ENCODE measurements at regions of chr14 and their contacts with region 1.

Region 1: GRCh38 chr14:61281186-61281947 is at the start of gene TMEM30B:
- DNase-seq: peak in 32 of 35 experiments; percentile 12 to 56 (median 38)
- ATAC-seq: peak in 3 of 4 experiments; percentile 21 to 44 (median 38)
- H3K4me3 ChIP-seq: peak within 1 kb of the TSS; percentile 62 to 90
- H3K4me3 Mint-ChIP-seq: peak within 1 kb of the TSS; percentile 88 to 95 (median 89)
- H3K27ac ChIP-seq: peak within 1 kb of the TSS; percentile 66
- H3K27ac Mint-ChIP-seq: peak within 1 kb of the TSS; percentile 91 to 92
- H3K4me1 ChIP-seq: peaks cover 0 to 16% of the 10 kb centered on the region in 2 experiments
- H3K4me1 Mint-ChIP-seq: peaks cover 35 to 38% (median 36%) of the 10 kb centered on the region in 3 donors
- H3K27me3 ChIP-seq: peaks cover 5 to 24% of the 10 kb centered on the region in 2 experiments
- H3K27me3 Mint-ChIP-seq: peaks cover 0 to 6% of the 10 kb centered on the region in 2 donors
- total RNA-seq, gene TMEM30B: 2.1 to 8.6 (median 2.9) TPM

Region 2: GRCh38 chr14:60734465-60735242 is 546.7 kb before region 1 on chr14 and contains the start of gene MNAT1:
- CTCF ChIA-PET with region 1: interaction called in 1 of 2 experiments, 18 read pairs
- POLR2A ChIA-PET with region 1: no interaction called
- DNase-seq: peak; percentile 57 to 85 (median 71)
- ATAC-seq: peak; percentile 94 to 98 (median 96)
- H3K4me3 ChIP-seq: peak within 1 kb of the TSS; percentile 96 to 100
- H3K4me3 Mint-ChIP-seq: peak within 1 kb of the TSS; percentile 99 to 100 (median 99)
- H3K27ac ChIP-seq: peak within 1 kb of the TSS; percentile 46
- H3K27ac Mint-ChIP-seq: peak within 1 kb of the TSS; percentile 79 to 90
- H3K4me1 ChIP-seq: peaks cover 0 to 12% of the 10 kb centered on the region in 2 experiments
- H3K4me1 Mint-ChIP-seq: peaks cover 28 to 36% (median 34%) of the 10 kb centered on the region in 3 donors
- H3K27me3 ChIP-seq: peaks cover 2 to 5% of the 10 kb centered on the region in 2 experiments
- H3K27me3 Mint-ChIP-seq: peaks cover 22% of the 10 kb centered on the region in 2 donors
- total RNA-seq, gene MNAT1: 14.7 to 24.8 (median 19.2) TPM

Region 3: DNA sequence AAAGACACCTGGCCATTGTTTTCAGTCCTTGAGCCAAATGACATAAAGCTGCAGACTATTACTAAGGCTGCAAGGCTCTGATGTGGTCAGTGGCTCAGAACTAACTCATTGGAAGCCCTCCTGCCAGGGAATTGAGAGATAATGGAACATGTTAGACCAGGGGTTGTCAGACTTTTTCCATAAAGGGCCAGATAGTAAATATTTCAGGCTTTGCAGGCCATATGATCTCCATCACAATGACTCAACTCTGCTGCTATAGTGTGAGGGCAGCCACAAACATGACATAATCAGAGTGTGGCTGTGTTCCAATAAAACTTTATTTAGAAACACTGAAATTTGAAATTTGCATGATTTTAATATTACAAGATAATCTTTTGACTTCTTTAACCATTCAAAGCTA is 140.5 kb before region 1 on chr14:
- CTCF ChIA-PET with region 1: no interaction called
- POLR2A ChIA-PET with region 1: no interaction called
- DNase-seq: no peak
- ATAC-seq: no peak
- H3K4me3 ChIP-seq: no peak overlapping the region
- H3K4me3 Mint-ChIP-seq: no peak overlapping the region
- H3K27ac ChIP-seq: no peak overlapping the region
- H3K27ac Mint-ChIP-seq: no peak overlapping the region
- H3K4me1 ChIP-seq: no peaks in the 10 kb centered on the region
- H3K4me1 Mint-ChIP-seq: no peaks in the 10 kb centered on the region
- H3K27me3 ChIP-seq: peaks cover 0 to 12% of the 10 kb centered on the region in 2 experiments
- H3K27me3 Mint-ChIP-seq: peaks cover 20 to 32% of the 10 kb centered on the region in 2 donors

Region 4: DNA sequence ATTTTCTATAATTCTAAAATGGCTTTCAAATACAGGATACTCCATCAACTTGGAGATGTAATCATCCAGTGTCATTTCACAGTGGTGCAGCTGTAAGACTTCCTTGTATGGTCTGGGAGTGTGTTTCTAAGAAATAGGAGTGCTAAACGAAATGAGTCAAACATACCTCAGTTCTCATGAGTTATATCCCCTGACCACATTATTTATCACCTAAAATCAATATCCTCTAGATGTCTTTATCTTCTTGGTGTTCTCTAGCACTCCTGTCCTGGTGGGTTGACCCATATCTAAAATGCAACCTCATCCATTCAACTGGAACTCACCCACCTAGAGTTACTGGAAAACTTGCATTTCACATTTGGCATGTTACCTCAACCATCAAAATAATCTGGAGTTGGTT is 33.4 kb before region 1 on chr14:
- CTCF ChIA-PET with region 1: no interaction called
- POLR2A ChIA-PET with region 1: no interaction called
- DNase-seq: no peak
- ATAC-seq: no peak
- H3K4me3 ChIP-seq: no peak overlapping the region
- H3K4me3 Mint-ChIP-seq: no peak overlapping the region
- H3K27ac ChIP-seq: no peak overlapping the region
- H3K27ac Mint-ChIP-seq: no peak overlapping the region
- H3K4me1 ChIP-seq: no peaks in the 10 kb centered on the region
- H3K4me1 Mint-ChIP-seq: peaks cover 0 to 6% (median 2%) of the 10 kb centered on the region in 3 donors
- H3K27me3 ChIP-seq: peaks cover 0 to 10% of the 10 kb centered on the region in 2 experiments
- H3K27me3 Mint-ChIP-seq: peaks cover 4 to 10% of the 10 kb centered on the region in 2 donors

Region 5: DNA sequence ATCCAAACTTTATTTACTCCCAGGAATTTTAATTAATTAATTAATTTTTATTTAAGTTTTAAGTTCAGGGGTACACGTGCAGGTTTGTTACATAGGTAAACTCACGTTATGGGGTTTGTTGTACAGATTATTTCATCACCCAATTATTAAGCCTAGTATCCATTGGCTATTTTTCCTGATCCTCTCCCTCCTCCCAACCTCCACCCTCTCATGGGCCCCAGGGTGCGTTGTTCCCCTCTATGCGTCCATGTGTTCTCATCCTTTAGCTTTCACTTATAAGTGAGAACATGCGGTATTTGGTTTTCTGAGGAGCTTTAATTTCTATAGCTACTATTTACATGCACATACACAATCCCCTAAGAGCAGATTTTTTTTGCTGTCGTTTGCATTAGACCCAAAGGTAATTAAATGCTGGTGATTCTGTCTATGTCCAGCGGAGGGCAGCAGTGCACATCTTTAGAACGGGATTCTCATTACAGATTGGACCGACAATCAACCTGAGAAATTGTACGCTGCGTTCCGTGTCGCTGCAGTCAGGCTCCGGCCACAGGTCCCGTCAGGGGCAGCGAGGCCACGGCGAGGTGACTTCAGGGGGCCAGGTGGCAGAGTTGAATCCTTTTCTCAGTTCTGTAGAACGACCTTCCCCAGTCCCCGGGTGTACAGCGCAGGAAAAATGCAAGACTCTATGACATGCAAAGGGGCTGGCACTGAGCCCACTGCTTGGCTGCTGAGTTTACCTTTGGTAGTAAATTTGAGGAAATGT is 11.9 kb before region 1 on chr14:
- CTCF ChIA-PET with region 1: interaction called, 7 to 10 read pairs
- POLR2A ChIA-PET with region 1: interaction called in 1 of 2 experiments, 4 read pairs
- DNase-seq: peak; percentile 50 to 89 (median 69)
- ATAC-seq: peak; percentile 86 to 94 (median 93)
- H3K4me3 ChIP-seq: peak overlapping the region; percentile 2 to 74
- H3K4me3 Mint-ChIP-seq: peak overlapping the region; percentile 47 to 58 (median 54)
- H3K27ac ChIP-seq: no peak overlapping the region
- H3K27ac Mint-ChIP-seq: no peak overlapping the region
- H3K4me1 ChIP-seq: peaks cover 2 to 5% of the 10 kb centered on the region in 2 experiments
- H3K4me1 Mint-ChIP-seq: peaks cover 4 to 7% (median 5%) of the 10 kb centered on the region in 3 donors
- H3K27me3 ChIP-seq: peaks cover 6 to 29% of the 10 kb centered on the region in 2 experiments
- H3K27me3 Mint-ChIP-seq: peaks cover 40 to 55% of the 10 kb centered on the region in 2 donors

Region 6: GRCh38 chr14:61295806-61296550 is 14.6 kb after region 1 on chr14:
- CTCF ChIA-PET with region 1: interaction called, 3 to 10 read pairs
- POLR2A ChIA-PET with region 1: interaction called, 3 read pairs
- DNase-seq: no peak
- ATAC-seq: peak in 3 of 4 experiments; percentile 30 to 47 (median 31)
- H3K4me3 ChIP-seq: no peak overlapping the region
- H3K4me3 Mint-ChIP-seq: no peak overlapping the region
- H3K27ac ChIP-seq: no peak overlapping the region
- H3K27ac Mint-ChIP-seq: peak overlapping the region in 1 of 2 donors; percentile 37
- H3K4me1 ChIP-seq: peaks cover 25 to 29% of the 10 kb centered on the region in 2 experiments
- H3K4me1 Mint-ChIP-seq: peaks cover 48 to 51% (median 50%) of the 10 kb centered on the region in 3 donors
- H3K27me3 ChIP-seq: no peaks in the 10 kb centered on the region
- H3K27me3 Mint-ChIP-seq: no peaks in the 10 kb centered on the region

Region 7: DNA sequence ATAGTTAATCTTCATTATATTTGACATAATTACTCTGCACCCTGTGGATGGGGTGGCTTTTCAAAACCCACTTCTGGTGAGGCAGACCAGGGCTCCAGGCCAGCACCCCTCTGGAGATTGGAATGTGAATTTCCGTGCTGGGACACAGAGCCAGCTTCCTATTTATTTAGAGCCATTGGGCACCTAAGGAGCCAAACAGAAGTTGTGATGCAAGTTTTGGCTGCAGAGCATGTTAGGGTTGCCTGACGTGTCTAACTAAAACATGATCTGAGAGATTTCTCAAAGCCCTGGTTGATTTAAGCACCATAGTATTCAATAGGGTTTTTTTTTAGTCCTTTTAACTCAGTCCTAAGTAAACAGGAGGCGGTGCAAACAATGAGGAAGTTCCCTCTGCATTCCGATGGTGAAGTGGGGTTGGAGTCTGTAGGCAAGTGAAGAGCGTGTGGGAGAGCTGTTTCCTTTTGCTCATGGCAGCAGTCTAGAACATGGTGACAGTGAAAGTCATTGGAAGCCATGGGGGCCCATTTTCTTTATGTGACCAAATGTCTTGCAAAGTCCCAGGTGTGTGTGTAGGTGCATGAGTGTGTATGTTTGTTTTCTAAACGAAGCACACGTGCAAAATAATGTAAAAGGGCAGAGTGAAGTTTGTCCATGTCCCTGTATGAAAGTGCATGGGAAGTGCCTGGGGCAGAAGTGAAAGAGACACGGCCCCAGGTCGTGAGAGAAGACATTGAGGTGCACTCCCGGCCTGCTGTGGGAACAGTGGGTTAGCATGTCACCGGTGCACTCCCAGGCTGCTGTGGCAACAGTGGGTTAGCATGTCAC is 157.7 kb after region 1 on chr14:
- CTCF ChIA-PET with region 1: no interaction called
- POLR2A ChIA-PET with region 1: interaction called in 1 of 2 experiments, 13 read pairs
- DNase-seq: peak in 27 of 35 experiments; percentile 27 to 73 (median 39)
- ATAC-seq: peak; percentile 50 to 61 (median 54)
- H3K4me3 ChIP-seq: peak overlapping the region; percentile 15 to 23
- H3K4me3 Mint-ChIP-seq: peak overlapping the region; percentile 63 to 84 (median 69)
- H3K27ac ChIP-seq: peak overlapping the region; percentile 77
- H3K27ac Mint-ChIP-seq: peak overlapping the region; percentile 93 to 96
- H3K4me1 ChIP-seq: peaks cover 68 to 76% of the 10 kb centered on the region in 2 experiments
- H3K4me1 Mint-ChIP-seq: peaks cover 89 to 96% (median 94%) of the 10 kb centered on the region in 3 donors
- H3K27me3 ChIP-seq: no peaks in the 10 kb centered on the region
- H3K27me3 Mint-ChIP-seq: no peaks in the 10 kb centered on the region

Region 8: DNA sequence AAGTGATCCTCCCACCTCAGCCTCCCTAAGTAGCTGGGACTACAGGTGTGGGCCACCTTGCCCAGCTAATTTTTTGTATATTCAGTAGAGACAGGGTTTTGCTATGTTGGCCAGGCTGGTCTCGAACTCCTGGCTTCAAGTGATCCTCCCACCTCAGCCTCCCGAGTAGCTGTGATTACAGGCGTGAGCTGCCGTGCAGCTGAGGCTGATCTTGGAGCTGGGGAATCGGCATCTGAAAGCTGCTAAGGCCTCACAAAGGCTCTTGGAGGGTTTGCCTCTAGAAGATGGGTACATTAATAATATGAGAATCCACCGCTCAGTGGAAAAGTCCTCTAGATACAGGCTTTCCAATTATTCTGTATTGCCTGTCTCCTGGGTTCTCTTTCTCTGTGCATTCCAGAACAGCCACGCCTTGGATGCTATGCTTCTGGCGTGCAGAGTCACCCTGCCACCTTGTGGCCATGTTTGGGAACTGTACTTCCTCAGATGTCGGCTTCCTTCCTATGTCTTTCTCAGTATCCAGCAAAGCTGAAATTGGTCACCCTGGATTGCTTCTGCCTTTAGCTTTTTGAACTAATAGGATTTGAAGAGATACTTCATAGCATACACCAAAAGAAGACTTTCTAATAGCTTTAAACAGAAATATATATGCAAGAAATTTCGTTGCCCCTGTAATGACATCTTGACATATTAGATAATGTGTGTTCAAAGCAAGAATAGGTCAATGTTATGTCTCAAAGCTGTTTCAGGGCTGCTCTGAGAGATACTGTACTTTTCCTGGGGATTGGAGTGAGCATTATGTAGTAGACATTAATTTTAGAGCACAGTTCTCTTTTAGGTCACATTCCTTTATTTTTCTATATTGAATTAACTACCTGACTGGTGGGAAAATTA is 556.2 kb after region 1 on chr14:
- CTCF ChIA-PET with region 1: interaction called in 1 of 2 experiments, 12 read pairs
- POLR2A ChIA-PET with region 1: no interaction called
- DNase-seq: peak; percentile 29 to 89 (median 63)
- ATAC-seq: peak; percentile 80 to 95 (median 92)
- H3K4me3 ChIP-seq: no peak overlapping the region
- H3K4me3 Mint-ChIP-seq: no peak overlapping the region
- H3K27ac ChIP-seq: no peak overlapping the region
- H3K27ac Mint-ChIP-seq: no peak overlapping the region
- H3K4me1 ChIP-seq: no peaks in the 10 kb centered on the region
- H3K4me1 Mint-ChIP-seq: peaks cover 0 to 5% (median 0%) of the 10 kb centered on the region in 3 donors
- H3K27me3 ChIP-seq: peaks cover 0 to 4% of the 10 kb centered on the region in 2 experiments
- H3K27me3 Mint-ChIP-seq: peaks cover 0 to 4% of the 10 kb centered on the region in 2 donors

Measured in T-cell (primary cell).